OCI-LY7 (cell line): ENCODE measurements at regions of chr15 and their contacts with region 1.

Region 1: GRCh38 chr15:74842581-74843444 is at the start of gene ULK3:
- DNase-seq: peak; percentile 91
- H3K4me3 ChIP-seq: peak within 1 kb of the TSS; percentile 73
- H3K27ac ChIP-seq: peak within 1 kb of the TSS; percentile 47
- H3K4me1 ChIP-seq: peaks cover 35% of the 10 kb centered on the region
- CTCF ChIP-seq: peak; percentile 68
- total RNA-seq, gene ULK3: 22.2 and 31.7 TPM in 2 replicates

Region 2: DNA sequence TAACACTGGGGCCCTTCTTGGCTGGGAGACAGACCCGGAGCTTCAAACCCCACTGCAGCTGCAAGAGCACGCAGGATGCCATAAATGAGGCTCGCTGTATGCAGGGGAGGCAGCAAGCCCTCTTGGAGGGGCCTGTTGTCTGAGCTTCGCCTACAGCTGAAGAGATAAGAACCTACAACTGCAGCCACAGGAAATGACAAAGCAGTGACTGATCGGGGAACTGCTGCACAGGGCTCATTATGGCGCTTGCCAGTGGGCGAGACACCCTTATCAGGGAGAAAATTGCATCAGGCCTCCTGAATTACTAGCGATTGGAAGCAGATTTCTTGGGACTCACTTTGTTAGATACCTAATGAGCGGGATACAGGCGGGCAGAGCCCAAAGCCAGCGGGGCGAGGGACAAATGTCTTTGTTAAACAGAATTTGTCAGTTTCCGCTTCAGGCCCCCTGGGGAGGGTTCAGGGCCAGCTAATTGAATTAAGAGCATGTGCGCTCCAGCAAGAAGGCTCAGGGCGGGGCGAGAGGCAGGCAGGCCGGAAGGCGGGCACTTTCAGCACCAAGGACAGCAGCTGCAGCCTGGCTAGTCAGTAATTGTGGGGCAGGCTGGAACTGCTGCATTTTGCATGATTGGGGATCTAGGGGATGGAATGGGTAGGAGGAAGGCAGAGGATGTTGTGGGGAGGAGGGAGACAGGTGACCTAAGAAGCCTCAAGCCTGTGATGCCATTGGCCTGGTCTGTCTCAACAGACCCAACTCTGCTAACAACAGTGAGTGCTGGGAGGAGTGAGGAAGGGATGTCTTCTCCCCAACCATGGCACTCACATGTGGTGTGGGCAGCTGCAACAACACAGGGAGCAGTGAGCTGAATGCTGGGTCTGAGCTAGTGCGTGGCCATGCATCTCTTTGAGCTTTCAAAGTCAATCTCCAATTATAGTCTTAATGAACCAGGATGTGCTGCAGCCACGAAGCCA is 551.4 kb before region 1 on chr15:
- CTCF ChIA-PET with region 1: no interaction called
- POLR2A ChIA-PET with region 1: no interaction called
- intact Hi-C with region 1: no loop called
- DNase-seq: peak; percentile 69
- H3K4me3 ChIP-seq: no peak overlapping the region
- H3K27ac ChIP-seq: no peak overlapping the region
- H3K4me1 ChIP-seq: no peaks in the 10 kb centered on the region
- CTCF ChIP-seq: no peak

Region 3: DNA sequence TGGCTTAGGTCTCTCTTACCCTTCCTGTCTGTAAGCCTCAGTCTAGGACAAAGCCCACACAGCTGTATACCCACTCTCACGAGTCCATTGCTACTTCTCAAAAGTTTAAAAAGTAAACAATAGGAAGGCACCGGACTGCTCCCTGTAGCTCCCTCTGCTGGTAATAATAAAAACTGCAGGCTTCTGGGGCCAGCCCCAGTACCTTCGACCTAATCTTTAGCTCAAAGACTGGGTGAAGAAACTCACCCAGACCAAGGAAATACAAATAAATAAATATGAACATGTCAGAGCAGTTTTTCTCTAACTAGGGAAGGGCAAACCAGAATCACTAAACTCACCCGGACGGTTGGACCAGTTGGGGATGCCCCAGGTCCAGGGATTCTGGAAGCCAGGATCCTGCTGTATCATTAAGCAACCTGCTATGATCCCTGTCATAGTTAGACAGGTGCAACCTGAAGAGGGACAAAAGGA is 58.8 kb after region 1 on chr15:
- CTCF ChIA-PET with region 1: interaction called, 6 read pairs
- POLR2A ChIA-PET with region 1: no interaction called
- intact Hi-C with region 1: loop called (anchors 1 kb)
- DNase-seq: peak; percentile 72
- H3K4me3 ChIP-seq: no peak overlapping the region
- H3K27ac ChIP-seq: peak overlapping the region; percentile 19
- H3K4me1 ChIP-seq: peaks cover 39% of the 10 kb centered on the region
- CTCF ChIP-seq: peak; percentile 99

Region 4: DNA sequence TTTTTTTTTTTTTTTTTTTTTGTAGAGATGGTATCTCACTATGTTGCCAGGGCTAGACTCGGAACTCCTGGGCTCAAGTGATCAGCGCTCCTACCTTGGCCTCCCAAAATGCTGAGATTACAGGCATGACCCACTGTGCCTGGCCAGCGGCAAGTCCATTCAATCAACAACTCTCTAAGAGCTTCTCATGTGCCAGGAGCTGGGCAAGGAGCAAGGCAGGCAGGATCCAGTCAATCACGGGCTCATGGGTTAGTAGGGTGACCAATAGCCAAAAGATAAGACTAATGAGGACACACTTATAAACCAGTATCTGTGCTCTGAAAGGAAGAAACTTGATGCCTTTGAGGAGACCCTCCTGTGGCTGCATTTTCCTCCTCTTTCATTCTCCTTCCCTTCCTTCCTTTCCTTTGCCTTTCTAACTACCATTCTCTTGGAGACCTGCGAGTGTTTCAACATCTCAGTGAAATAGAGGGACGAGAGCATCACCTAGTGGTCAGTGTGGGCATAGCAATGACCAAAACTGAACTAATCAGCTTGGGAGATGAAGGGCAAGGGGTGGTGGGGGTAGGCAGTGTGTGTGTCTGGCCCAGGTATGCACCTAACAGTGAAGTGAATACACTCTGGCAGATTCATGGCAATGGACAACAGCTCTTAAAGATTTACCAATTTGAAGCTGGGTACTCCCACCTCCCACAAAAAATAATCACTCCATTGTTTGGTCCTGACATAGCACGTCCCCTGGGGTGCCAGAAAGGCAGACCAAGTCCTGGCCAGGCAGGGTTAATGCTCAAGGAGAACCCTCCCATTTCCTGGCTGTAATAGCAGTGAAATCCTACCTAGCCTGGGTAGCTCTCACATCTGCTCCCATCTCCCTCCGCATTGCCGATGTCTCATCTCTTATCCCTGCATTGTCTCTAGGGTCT is 107.5 kb after region 1 on chr15:
- CTCF ChIA-PET with region 1: no interaction called
- POLR2A ChIA-PET with region 1: no interaction called
- intact Hi-C with region 1: loop called (anchors 1 kb)
- DNase-seq: peak; percentile 80
- H3K4me3 ChIP-seq: no peak overlapping the region
- H3K27ac ChIP-seq: no peak overlapping the region
- H3K4me1 ChIP-seq: peaks cover 22% of the 10 kb centered on the region
- CTCF ChIP-seq: peak; percentile 99

Region 5: GRCh38 chr15:74978503-74978902 is 135.7 kb after region 1 on chr15:
- CTCF ChIA-PET with region 1: interaction called, 13 read pairs
- POLR2A ChIA-PET with region 1: no interaction called
- intact Hi-C with region 1: no loop called
- DNase-seq: no peak
- H3K4me3 ChIP-seq: no peak overlapping the region
- H3K27ac ChIP-seq: no peak overlapping the region
- H3K4me1 ChIP-seq: no peaks in the 10 kb centered on the region
- CTCF ChIP-seq: no peak